ENCODE measurements at regions of chr21 and their contacts with region 1.

Region 1: DNA sequence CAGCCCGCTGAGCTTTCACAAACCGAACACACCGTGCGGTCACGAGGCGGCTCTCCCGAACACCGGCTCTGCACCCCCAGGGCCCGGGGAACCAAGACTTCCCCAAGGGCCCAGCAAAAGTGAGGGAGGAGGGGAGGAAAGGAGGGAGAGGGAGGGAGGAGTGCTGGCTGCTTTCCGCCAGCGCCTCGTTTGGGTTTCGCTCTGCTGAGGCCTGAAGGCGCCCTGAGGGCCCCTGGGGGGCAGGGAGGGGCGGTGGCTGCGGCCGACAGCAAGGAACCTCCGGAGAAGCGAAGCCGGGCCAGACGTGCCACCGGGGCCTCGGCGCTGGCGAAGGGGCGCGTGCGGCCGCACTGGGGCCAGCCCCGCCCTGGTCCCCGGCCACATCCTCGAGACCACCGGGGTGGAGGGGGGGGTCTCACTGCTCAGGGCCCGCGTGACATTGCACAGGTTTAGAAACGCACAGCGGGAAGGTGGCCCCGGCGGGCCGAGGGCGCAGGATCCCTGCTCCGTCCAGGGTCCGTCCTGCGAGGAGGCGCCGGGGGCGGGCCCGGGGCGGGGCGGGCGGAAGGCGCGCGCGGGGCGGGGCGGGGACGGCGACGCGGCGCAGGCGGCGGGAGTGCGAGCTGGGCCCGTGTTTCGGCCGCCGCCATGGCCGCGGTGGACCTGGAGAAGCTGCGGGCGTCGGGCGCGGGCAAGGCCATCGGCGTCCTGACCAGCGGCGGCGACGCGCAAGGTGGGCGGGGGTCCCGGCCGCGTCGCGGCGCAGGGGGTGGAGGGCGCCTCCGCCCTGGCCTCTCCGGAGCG is at the start of gene PFKL:
- DNase-seq: peak; percentile 72
- H3K4me3 Mint-ChIP-seq: peak within 1 kb of the TSS; percentile 84
- H3K27ac Mint-ChIP-seq: peak within 1 kb of the TSS; percentile 89
- H3K4me1 Mint-ChIP-seq: peaks cover 29% of the 10 kb centered on the region
- H3K27me3 Mint-ChIP-seq: no peaks in the 10 kb centered on the region
- total RNA-seq, gene PFKL: 156 and 158 TPM in 2 replicates

Region 2: DNA sequence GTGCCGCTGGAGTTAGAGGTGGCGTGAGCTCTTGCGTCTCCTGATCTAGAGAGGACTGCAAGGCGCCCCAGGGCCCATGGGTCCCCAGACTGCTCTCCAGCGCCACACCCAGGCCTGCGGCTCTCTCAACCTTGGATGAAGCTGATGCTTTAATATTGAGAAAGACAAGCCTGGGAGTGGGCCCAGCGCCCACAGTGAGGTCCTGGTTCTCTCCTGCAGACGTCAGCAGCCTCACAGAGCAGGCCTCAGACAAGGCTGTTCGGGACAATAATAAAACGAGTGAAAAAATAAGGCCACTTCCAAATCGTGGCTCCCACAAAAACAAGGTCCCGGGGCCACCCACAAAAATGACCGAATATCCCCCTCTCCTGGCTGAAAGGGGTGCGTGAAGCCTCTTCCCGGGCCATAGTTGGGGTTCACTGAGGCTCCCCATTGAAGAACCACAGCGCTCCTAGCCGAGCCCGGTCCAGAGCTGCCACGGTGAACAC is 32.0 kb before region 1 on chr21:
- intact Hi-C with region 1: no loop called
- DNase-seq: no peak
- H3K4me3 Mint-ChIP-seq: no peak overlapping the region
- H3K27ac Mint-ChIP-seq: no peak overlapping the region
- H3K4me1 Mint-ChIP-seq: no peaks in the 10 kb centered on the region
- H3K27me3 Mint-ChIP-seq: peaks cover 1% of the 10 kb centered on the region

Region 3: GRCh38 chr21:44310628-44311511 is 11.2 kb after region 1 on chr21:
- intact Hi-C with region 1: no loop called
- DNase-seq: no peak
- H3K4me3 Mint-ChIP-seq: no peak overlapping the region
- H3K27ac Mint-ChIP-seq: no peak overlapping the region
- H3K4me1 Mint-ChIP-seq: no peaks in the 10 kb centered on the region
- H3K27me3 Mint-ChIP-seq: no peaks in the 10 kb centered on the region

Region 4: DNA sequence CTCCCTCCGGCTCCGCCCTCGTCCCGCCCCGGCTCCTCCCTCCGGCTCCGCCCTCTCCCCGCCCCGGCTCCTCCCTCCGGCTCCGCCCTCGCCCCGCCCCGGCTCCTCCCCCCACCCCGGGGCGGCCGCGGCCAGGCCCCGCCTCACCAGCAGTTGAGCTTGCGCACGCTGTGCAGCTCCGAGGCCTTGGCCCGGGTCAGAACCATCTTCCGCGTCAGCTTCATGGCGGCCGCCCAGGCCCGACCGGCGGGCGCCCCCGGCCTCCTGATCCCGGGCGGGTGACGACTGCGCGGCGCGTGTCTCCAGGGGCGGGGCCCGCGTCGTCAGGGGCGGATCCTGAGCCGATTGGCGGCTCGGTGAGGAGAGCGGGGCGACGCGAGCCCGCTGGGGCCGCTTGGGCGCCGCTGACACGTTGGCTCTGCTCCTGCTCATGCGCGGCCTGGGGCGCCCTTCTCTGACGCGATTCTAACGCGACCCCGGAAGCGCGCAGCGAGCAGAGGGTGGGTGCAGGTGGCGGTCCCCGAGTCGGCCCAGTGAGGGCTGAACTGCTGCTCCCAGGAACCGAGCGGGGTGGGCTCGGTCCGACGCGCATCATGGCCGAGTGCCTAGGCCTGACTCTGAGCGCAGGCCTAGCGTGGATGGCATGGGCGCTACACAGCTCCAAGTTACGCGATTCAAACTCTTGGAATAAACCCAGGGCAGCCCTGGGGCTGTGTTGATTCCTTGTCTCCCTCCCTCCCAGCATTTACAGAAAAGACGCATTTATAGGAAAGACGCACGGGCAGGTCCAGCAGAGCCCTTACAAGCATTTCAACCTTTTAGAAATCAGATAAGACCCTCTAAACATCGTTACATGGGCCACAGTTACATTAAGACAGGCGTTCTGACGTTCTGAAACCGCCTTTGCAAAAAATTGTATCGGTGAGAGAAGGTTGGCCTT is 39.6 kb after region 1 on chr21 and contains the start of gene CFAP410:
- intact Hi-C with region 1: loop called (anchors 2 kb)
- DNase-seq: peak; percentile 95
- H3K4me3 Mint-ChIP-seq: peak within 1 kb of the TSS; percentile 93
- H3K27ac Mint-ChIP-seq: peak within 1 kb of the TSS; percentile 91
- H3K4me1 Mint-ChIP-seq: peaks cover 19% of the 10 kb centered on the region
- H3K27me3 Mint-ChIP-seq: no peaks in the 10 kb centered on the region
- total RNA-seq, gene CFAP410: 13.8 and 15.2 TPM in 2 replicates

Measured in activated T-helper 2 cell treated with anti-CD3 and anti-CD28 coated beads, Interferon-gamma antibody, Interleukin-2, Interleukin-4, amounts not matched to agents 10 μg/mL and 5 μg/mL and 100 μg/mL, durations not matched to agents 14 hours and 24 hours and 36 hours (primary cell).